ENCODE measurements at regions of chr7 and their contacts with region 1.

Region 1: GRCh38 chr7:16554518-16555236 is 28.1 kb downstream of the LRRC72 start:
- DNase-seq: no peak
- H3K4me3 ChIP-seq: no peak overlapping the region
- H3K27ac ChIP-seq: no peak overlapping the region
- H3K4me1 ChIP-seq: no peaks in the 10 kb centered on the region
- H3K27me3 ChIP-seq: no peaks in the 10 kb centered on the region
- CTCF ChIP-seq: no peak

Region 2: GRCh38 chr7:16062269-16062668 is 492.4 kb before region 1 on chr7:
- CTCF ChIA-PET with region 1: no interaction called
- POLR2A ChIA-PET with region 1: no interaction called
- intact Hi-C with region 1: no loop called
- DNase-seq: no peak
- H3K4me3 ChIP-seq: no peak overlapping the region
- H3K27ac ChIP-seq: no peak overlapping the region
- H3K4me1 ChIP-seq: peaks cover 24% of the 10 kb centered on the region
- H3K27me3 ChIP-seq: peaks cover 75% of the 10 kb centered on the region
- CTCF ChIP-seq: no peak

Region 3: GRCh38 chr7:16594061-16594460 is 39.4 kb after region 1 on chr7:
- CTCF ChIA-PET with region 1: no interaction called
- POLR2A ChIA-PET with region 1: interaction called, 10 read pairs
- intact Hi-C with region 1: no loop called
- DNase-seq: no peak
- H3K4me3 ChIP-seq: no peak overlapping the region
- H3K27ac ChIP-seq: no peak overlapping the region
- H3K4me1 ChIP-seq: peaks cover 18% of the 10 kb centered on the region
- H3K27me3 ChIP-seq: no peaks in the 10 kb centered on the region
- CTCF ChIP-seq: no peak

Region 4: GRCh38 chr7:16719699-16720098 is 165.0 kb after region 1 on chr7:
- CTCF ChIA-PET with region 1: no interaction called
- POLR2A ChIA-PET with region 1: no interaction called
- intact Hi-C with region 1: no loop called
- DNase-seq: no peak
- H3K4me3 ChIP-seq: no peak overlapping the region
- H3K27ac ChIP-seq: peak overlapping the region; percentile 20
- H3K4me1 ChIP-seq: peaks cover 26% of the 10 kb centered on the region
- H3K27me3 ChIP-seq: no peaks in the 10 kb centered on the region
- CTCF ChIP-seq: no peak